PC-9 (cell line): ENCODE measurements at regions of chr19 and their contacts with region 1.

Region 1: GRCh38 chr19:32464279-32464678 is 58.7 kb downstream of the DPY19L3 start:
- DNase-seq: no peak
- H3K4me3 ChIP-seq: no peak overlapping the region
- H3K27ac ChIP-seq: no peak overlapping the region
- H3K4me1 ChIP-seq: no peaks in the 10 kb centered on the region
- H3K27me3 ChIP-seq: no peaks in the 10 kb centered on the region
- CTCF ChIP-seq: peak; percentile 67

Region 2: DNA sequence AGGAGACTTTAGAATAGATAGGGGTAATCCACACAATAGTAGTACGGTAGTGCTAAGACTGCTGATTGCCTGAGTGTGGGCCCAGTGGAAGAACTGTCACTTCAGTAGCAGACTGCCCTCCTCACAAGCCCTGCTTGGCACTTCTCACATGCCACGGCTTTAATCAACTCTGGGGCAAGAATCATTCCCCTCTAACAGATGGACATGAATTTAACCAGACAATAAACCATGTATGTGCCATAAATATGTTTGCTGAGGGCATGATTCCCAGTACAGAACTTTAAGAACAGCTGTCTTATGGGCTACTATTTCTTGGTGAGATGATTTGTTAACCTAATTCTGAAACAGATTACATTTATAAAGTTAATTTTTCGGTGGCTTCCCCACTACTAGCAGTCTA is 36.7 kb before region 1 on chr19:
- CTCF ChIA-PET with region 1: no interaction called
- POLR2A ChIA-PET with region 1: interaction called, 16 read pairs
- intact Hi-C with region 1: no loop called
- DNase-seq: no peak
- H3K4me3 ChIP-seq: no peak overlapping the region
- H3K27ac ChIP-seq: no peak overlapping the region
- H3K4me1 ChIP-seq: no peaks in the 10 kb centered on the region
- H3K27me3 ChIP-seq: no peaks in the 10 kb centered on the region
- CTCF ChIP-seq: no peak